Head of caudate nucleus (tissue), 42 donors: ENCODE measurements at regions of chr1 and their contacts with region 1.

Region 1: GRCh38 chr1:109532365-109533136 is 7.1 kb upstream of the GPR61 start:
- DNase-seq: peak; percentile 84 to 95 (median 89)

Region 2: DNA sequence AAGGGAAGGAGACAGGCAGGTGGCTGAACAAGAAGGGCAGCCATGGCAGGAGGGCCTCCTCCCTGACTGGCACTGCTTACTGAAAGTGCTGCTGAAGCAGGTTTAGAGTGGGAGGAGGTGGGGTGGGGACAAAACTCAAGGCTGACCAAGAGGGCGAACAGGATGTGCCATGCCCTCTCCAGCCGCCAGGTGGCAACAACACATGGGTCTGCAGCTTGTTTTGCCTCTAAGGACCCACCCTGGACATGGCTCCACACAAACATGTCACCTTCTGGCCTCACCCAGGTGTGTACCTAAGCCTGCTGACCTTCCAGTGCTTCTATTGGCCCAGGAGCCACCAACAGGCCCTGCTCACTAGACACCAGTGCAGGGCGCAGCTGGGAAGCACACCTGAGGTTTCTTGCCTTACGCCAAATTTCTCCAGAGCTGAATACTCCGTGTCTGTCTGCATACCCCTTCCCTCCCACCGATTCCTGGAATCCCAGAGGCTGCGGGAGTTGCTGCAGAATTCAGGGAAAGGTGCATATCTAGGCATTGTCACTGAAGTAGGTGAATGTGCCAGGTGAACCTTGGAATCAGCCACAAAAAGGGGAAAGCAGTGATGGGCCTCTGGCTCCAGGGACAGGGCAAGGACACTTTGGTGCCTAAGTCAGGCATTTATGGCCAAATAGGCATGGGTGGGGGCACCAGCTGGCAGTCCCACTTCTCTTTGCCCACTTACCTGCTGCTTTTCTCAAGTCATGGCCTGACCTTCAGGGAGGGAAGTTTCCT is 254.9 kb before region 1 on chr1:
- intact Hi-C with region 1: loop called (anchors 10 kb)
- DNase-seq: peak in 41 of 42 donors; percentile 66 to 95 (median 87)

Region 3: DNA sequence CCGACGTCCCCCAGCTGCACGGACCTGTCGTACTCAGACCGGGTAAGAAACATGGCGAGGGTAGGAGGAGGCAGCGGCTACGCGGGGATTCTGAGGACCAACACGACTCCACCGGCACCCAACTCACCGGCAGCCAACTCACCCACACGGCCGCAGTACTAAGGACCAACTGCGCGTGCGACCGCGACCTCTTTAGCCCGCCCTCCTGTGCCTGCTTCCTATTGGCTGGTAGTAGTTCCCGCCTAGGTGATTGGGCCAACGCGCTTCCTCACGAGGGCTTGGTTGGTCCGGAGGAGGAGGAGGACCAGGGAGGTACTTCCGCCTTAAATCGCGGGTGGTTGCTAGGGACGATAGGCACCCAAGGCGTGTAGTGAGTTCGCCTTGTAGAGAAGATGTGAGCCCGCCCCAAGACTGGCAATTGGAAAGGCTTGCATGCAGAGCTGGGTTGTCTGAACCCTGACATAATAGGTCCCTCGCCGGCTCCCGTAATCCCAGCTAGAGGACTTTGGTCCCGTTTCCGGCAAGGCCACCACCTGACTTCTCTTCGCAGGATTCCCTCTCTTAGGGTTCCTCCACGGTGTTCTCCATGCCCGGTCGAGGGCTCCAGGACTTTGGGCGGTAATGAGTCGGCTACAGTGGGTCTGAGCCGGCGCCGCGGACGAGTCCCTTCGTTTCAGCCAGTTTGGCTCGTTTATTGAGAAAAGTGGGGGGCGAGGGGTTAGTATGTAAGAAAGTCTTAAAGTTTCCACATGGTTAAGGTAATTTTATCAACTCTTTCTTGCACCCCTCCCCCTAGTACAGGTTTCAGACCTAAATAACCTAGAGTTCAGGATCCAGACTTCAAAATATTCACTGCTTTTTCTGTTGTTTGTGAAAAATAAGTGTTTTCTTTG is 106.0 kb before region 1 on chr1 and contains the start of gene PSMA5:
- intact Hi-C with region 1: loop called (anchors 5 kb)
- DNase-seq: peak; percentile 93 to 99 (median 97)

Region 4: DNA sequence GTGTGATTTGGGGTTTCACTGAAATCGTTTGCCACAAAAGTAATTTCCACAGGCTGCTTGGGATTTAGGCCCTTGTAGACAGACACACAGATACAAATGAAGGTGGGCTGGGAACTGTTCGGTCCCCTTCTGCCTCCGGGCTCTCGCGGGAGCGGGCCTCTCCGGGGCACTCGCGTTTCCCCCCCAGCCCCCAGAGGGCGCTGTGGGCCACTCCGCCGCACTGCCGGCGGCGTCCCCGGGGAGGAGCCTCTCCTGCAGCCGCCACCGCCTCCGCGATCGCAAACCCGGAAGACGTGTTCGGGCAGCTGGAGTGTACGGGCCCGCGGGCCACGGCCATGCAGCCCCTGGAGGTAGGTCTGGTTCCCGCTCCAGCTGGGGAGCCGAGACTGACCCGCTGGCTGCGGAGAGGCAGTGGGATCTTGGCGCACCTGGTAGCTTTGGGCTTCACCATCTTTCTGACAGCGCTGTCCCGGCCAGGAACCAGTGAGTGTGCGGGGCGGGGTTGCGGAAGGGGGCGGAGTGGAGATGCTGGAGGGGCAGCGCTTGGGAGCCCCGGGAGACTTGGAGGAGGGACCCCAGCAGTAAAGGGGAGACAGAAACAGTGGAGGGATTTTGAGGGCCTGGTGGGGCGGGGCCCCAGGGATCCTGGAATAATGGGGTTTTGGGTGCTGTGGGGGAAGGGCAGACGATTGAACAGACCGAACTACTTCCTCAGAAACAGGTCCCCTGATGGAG is 38.6 kb before region 1 on chr1 and contains the start of gene CYB561D1:
- intact Hi-C with region 1: loop called (anchors 2 kb)
- DNase-seq: peak; percentile 59 to 95 (median 89)

Region 5: DNA sequence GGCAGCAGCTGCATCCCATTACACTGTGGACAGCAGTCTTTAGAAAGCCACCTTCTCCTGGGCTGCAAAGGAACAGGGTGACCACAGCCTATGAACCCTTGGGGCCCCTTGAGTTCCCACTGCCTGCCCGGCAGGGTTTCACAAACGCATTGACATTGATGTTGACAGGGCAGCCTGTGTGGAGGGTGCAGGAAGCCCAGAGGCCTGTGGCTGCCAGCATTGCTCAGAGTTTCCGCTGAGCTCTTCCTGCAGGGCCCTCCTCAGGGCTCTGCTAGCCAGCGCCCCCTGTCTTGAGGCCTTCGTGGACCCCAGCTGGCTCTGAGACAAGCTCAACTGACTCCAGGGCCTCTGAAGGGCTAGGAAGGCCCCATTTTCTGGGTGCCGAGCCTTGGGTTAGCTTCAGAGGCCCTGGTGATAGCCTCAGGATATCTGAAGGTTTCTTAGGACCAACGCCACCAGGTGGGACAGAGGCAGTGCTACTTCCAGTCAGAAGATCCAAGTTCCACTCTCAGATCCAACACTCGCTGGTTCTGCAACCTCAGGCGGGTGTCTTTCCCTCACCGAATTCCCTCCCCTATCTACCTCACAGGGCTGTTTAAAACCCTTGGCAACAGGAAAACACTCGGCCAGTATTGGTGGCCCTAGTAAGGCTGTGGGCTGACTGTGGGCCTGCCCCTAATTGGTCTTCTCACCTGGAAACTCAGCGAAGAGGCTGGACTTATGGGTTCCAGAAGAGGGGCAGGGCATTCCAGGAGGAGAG is 258.4 kb after region 1 on chr1:
- intact Hi-C with region 1: no loop called
- DNase-seq: peak in 24 of 42 donors; percentile 9 to 69 (median 38)